CD4-positive, alpha-beta T cell (primary cell): ENCODE measurements at regions of chr22 and their contacts with region 1.

Region 1: DNA sequence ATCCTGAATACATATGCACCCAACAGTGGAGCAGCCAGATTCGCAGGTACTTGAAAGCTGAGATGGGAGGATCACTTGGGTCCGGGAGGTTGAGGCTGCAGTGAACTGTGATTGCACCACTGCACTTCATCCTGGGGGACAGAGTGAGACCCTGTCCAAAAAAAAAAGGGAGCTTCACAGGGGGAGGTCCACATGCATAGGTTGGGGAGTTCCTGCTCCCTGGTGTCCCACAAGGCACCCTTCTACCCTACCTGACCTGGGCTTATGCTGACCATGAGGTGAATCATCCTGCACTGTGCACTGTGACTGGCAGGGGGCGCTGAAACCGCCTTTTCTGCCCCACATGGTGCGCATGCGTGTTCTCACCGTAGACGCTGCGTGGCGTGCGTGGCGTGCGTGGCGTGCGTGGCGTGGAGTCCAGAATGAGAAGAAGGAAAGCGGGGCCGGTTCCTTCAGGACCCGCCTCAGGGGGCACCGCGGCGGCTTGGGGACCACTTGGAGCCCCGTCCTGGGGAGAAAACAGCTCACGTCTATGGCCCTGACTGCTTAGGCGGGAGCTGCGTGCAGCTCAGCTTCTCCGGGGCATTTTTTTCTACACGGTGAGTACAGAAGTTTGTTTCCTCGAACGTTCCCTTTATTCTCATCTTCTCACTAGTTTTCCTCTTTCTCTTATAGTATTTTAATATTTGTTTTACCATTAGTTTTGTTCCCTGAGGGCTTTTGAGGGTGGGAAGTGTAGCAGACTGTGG is 116.6 kb upstream of the GRK3 start:
- DNase-seq: peak; percentile 77 to 95 (median 85)
- ATAC-seq: peak; percentile 95
- H3K4me3 ChIP-seq: peak overlapping the region; percentile 94
- H3K4me3 Mint-ChIP-seq: peak overlapping the region; percentile 96
- H3K27ac ChIP-seq: peak overlapping the region; percentile 31 to 67
- H3K27ac Mint-ChIP-seq: peak overlapping the region; percentile 88
- H3K4me1 ChIP-seq: peaks cover 25% of the 10 kb centered on the region
- H3K4me1 Mint-ChIP-seq: peaks cover 45% of the 10 kb centered on the region
- H3K27me3 ChIP-seq: no peaks in the 10 kb centered on the region
- H3K27me3 Mint-ChIP-seq: no peaks in the 10 kb centered on the region
- CTCF ChIP-seq: peak; percentile 88

Region 2: GRCh38 chr22:25067851-25068421 is 379.9 kb before region 1 on chr22:
- CTCF ChIA-PET with region 1: no interaction called
- POLR2A ChIA-PET with region 1: no interaction called
- intact Hi-C with region 1: loop called in 1 of 2 experiments (anchors 10 kb)
- DNase-seq: peak; percentile 75 to 97 (median 86)
- ATAC-seq: peak; percentile 83
- H3K4me3 ChIP-seq: peak overlapping the region; percentile 29
- H3K4me3 Mint-ChIP-seq: peak overlapping the region; percentile 73
- H3K27ac ChIP-seq: peak overlapping the region; percentile 83 to 90
- H3K27ac Mint-ChIP-seq: peak overlapping the region; percentile 96
- H3K4me1 ChIP-seq: peaks cover 93% of the 10 kb centered on the region
- H3K4me1 Mint-ChIP-seq: peaks cover 81% of the 10 kb centered on the region
- H3K27me3 ChIP-seq: no peaks in the 10 kb centered on the region
- H3K27me3 Mint-ChIP-seq: no peaks in the 10 kb centered on the region
- CTCF ChIP-seq: no peak

Region 3: GRCh38 chr22:25494774-25495173 is 46.9 kb after region 1 on chr22:
- CTCF ChIA-PET with region 1: no interaction called
- POLR2A ChIA-PET with region 1: no interaction called
- intact Hi-C with region 1: loop called in 1 of 2 experiments (anchors 2 kb)
- DNase-seq: no peak
- ATAC-seq: no peak
- H3K4me3 ChIP-seq: no peak overlapping the region
- H3K4me3 Mint-ChIP-seq: no peak overlapping the region
- H3K27ac ChIP-seq: no peak overlapping the region
- H3K27ac Mint-ChIP-seq: no peak overlapping the region
- H3K4me1 ChIP-seq: no peaks in the 10 kb centered on the region
- H3K4me1 Mint-ChIP-seq: no peaks in the 10 kb centered on the region
- H3K27me3 ChIP-seq: no peaks in the 10 kb centered on the region
- H3K27me3 Mint-ChIP-seq: peaks cover 25% of the 10 kb centered on the region
- CTCF ChIP-seq: no peak

Region 4: DNA sequence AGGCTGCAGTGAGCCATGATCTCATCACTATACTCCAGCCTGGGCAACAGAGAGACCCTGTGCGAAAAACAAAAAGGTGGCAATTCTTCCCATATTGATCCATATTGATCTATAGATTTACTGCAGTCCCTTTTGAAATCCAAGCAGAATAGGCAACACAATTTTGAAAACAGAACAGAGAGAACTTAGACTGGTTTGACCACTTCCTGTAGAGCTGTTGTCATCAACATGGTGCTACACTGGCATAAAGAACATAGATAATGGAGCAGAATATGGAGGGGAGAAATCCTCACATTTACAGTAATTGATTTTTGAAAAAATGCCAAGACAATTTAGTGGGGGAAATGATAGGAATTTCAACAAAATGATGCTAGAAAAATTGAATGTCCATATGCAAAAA is 150.7 kb after region 1 on chr22:
- CTCF ChIA-PET with region 1: no interaction called
- POLR2A ChIA-PET with region 1: no interaction called
- intact Hi-C with region 1: no loop called
- DNase-seq: peak in 1 of 14 experiments; percentile 4
- ATAC-seq: no peak
- H3K4me3 ChIP-seq: no peak overlapping the region
- H3K4me3 Mint-ChIP-seq: no peak overlapping the region
- H3K27ac ChIP-seq: no peak overlapping the region
- H3K27ac Mint-ChIP-seq: no peak overlapping the region
- H3K4me1 ChIP-seq: peaks cover 4% of the 10 kb centered on the region
- H3K4me1 Mint-ChIP-seq: peaks cover 11% of the 10 kb centered on the region
- H3K27me3 ChIP-seq: no peaks in the 10 kb centered on the region
- H3K27me3 Mint-ChIP-seq: no peaks in the 10 kb centered on the region
- CTCF ChIP-seq: no peak

Region 5: DNA sequence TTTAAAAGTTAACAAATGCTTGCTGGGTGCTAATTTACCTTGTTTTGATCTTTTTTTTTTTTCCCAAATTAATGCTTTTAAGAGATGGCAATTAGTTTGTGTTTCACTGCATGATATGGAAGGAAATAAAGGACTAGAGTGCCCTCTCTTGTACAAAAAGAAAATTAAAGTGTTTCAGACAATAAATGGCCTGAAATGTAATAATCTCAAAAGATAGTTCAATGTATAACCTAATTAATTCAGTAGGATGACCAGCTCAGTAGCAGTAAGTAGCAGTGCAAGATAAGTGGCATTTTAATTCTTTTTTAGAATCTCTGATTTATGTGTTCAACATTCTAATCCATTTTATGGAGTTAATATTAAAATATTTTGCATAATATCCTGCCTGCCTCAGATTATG is 254.2 kb after region 1 on chr22:
- CTCF ChIA-PET with region 1: no interaction called
- POLR2A ChIA-PET with region 1: no interaction called
- intact Hi-C with region 1: loop called in 1 of 2 experiments (anchors 5 kb)
- DNase-seq: peak in 2 of 14 experiments; percentile 10 to 14
- ATAC-seq: no peak
- H3K4me3 ChIP-seq: no peak overlapping the region
- H3K4me3 Mint-ChIP-seq: no peak overlapping the region
- H3K27ac ChIP-seq: no peak overlapping the region
- H3K27ac Mint-ChIP-seq: no peak overlapping the region
- H3K4me1 ChIP-seq: no peaks in the 10 kb centered on the region
- H3K4me1 Mint-ChIP-seq: no peaks in the 10 kb centered on the region
- H3K27me3 ChIP-seq: no peaks in the 10 kb centered on the region
- H3K27me3 Mint-ChIP-seq: no peaks in the 10 kb centered on the region
- CTCF ChIP-seq: no peak

Region 6: DNA sequence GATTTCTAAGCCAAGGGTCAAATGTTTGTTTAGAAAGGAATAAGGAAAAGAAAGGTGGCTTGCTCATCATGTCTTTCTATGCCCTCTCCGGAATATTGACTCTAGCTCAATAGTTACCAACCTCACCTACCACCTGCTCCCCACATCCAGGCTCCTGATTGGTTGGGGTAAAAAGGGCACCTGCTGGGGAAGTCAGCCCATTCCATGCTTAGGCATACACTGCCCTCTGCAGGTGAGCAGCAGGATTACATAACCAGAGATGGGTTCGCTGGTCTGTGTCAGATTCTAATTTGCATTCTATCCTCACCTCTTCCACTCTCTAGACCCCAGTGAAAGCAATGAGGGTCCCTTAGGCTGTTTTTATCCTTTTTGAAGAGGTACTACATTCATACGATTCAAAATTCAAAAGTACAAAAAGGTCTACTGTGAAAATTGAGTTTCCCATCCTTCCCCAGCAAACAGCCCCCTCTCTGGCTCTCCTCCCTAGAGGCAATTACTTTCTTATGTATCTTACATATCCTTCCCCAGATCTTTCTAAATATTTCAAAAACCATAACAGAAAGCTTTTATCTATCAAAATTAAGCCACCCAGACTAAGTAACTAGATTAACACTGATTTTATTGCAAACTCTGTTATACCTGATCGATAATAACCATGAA is 883.2 kb after region 1 on chr22:
- CTCF ChIA-PET with region 1: no interaction called
- POLR2A ChIA-PET with region 1: no interaction called
- intact Hi-C with region 1: loop called (anchors 1 to 5 kb)
- DNase-seq: peak; percentile 15 to 74 (median 40)
- ATAC-seq: peak; percentile 78
- H3K4me3 ChIP-seq: no peak overlapping the region
- H3K4me3 Mint-ChIP-seq: no peak overlapping the region
- H3K27ac ChIP-seq: no peak overlapping the region
- H3K27ac Mint-ChIP-seq: no peak overlapping the region
- H3K4me1 ChIP-seq: no peaks in the 10 kb centered on the region
- H3K4me1 Mint-ChIP-seq: no peaks in the 10 kb centered on the region
- H3K27me3 ChIP-seq: peaks cover 8 to 12% of the 10 kb centered on the region in 2 experiments
- H3K27me3 Mint-ChIP-seq: peaks cover 45% of the 10 kb centered on the region
- CTCF ChIP-seq: peak; percentile 89